H1 (cell line): ENCODE measurements at regions of chr6 and their contacts with region 1.

Region 1: GRCh38 chr6:8219352-8219943 is 117.1 kb upstream of the EEF1E1 start:
- DNase-seq: peak in 1 of 2 experiments; percentile 59
- H3K4me3 ChIP-seq: no peak overlapping the region
- H3K27ac ChIP-seq: no peak overlapping the region
- H3K4me1 ChIP-seq: no peaks in the 10 kb centered on the region
- H3K27me3 ChIP-seq: no peaks in the 10 kb centered on the region
- CTCF ChIP-seq: peak in 2 of 3 experiments; percentile 64 to 72; a peak in 3 of 4 replicates
- EP300 ChIP-seq: no peak
- POLR2A ChIP-seq: no peak
- RAD21 ChIP-seq: peak; percentile 86 to 88

Region 2: GRCh38 chr6:8139451-8139850 is 80.0 kb before region 1 on chr6:
- CTCF ChIA-PET with region 1: interaction called, 24 read pairs
- POLR2A ChIA-PET with region 1: no interaction called
- DNase-seq: no peak
- H3K4me3 ChIP-seq: no peak overlapping the region
- H3K27ac ChIP-seq: no peak overlapping the region
- H3K4me1 ChIP-seq: no peaks in the 10 kb centered on the region
- H3K27me3 ChIP-seq: no peaks in the 10 kb centered on the region
- CTCF ChIP-seq: no peak
- EP300 ChIP-seq: no peak
- POLR2A ChIP-seq: no peak
- RAD21 ChIP-seq: no peak

Region 3: DNA sequence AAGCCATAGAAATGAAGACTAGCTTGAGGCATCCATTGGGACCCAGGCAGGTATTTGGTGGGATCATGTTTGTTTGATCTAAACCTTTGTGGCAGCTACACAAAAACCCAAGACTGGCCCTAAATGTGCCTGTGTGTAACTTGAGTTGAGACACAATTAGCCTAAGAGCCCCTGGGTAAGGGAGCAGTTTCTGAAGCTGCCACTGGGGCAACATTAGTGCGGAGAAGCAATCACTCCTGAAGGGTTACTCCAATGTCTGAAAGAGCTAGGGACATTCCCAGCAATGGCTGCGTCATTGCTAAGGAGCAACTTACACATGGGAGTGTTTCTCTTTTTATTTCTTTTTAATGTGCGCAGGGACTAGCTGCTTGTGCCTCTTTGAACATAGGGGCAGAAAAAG is 49.2 kb before region 1 on chr6:
- CTCF ChIA-PET with region 1: interaction called, 45 read pairs
- POLR2A ChIA-PET with region 1: no interaction called
- DNase-seq: no peak
- H3K4me3 ChIP-seq: no peak overlapping the region
- H3K27ac ChIP-seq: no peak overlapping the region
- H3K4me1 ChIP-seq: peaks cover 0 to 2% (median 0%) of the 10 kb centered on the region in 4 experiments; a peak in 2 of 7 replicates
- H3K27me3 ChIP-seq: no peaks in the 10 kb centered on the region
- CTCF ChIP-seq: peak; percentile 6 to 48 (median 28)
- EP300 ChIP-seq: no peak
- POLR2A ChIP-seq: no peak
- RAD21 ChIP-seq: peak; percentile 4 to 34; a peak in 2 of 4 replicates

Region 4: DNA sequence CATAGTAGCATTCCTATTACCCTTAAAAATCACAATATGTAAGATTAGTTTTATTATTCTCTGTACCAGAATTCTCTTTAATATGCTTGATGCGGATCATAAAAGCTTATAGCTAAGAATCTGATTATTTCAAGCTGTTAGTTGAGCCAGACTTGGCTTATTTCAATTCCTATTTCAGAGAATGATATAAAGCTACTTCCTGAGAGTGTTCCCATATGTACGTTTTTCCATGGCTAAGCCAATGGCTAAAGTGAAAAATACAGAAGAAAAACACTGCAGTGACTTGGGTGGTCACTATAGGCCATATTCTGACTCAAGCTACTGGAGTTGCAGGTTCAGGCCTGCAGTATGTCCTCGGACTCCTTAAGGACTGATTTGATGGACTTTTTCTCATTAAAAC is 19.2 kb before region 1 on chr6:
- CTCF ChIA-PET with region 1: interaction called, 39 read pairs
- POLR2A ChIA-PET with region 1: no interaction called
- DNase-seq: no peak
- H3K4me3 ChIP-seq: no peak overlapping the region
- H3K27ac ChIP-seq: no peak overlapping the region
- H3K4me1 ChIP-seq: no peaks in the 10 kb centered on the region
- H3K27me3 ChIP-seq: no peaks in the 10 kb centered on the region
- CTCF ChIP-seq: no peak
- EP300 ChIP-seq: no peak
- POLR2A ChIP-seq: no peak
- RAD21 ChIP-seq: no peak

Region 5: GRCh38 chr6:8229915-8230756 is 10.7 kb after region 1 on chr6:
- CTCF ChIA-PET with region 1: interaction called, 40 read pairs
- POLR2A ChIA-PET with region 1: no interaction called
- DNase-seq: peak in 1 of 2 experiments; percentile 39
- H3K4me3 ChIP-seq: no peak overlapping the region
- H3K27ac ChIP-seq: no peak overlapping the region
- H3K4me1 ChIP-seq: peaks cover 0 to 4% (median 0%) of the 10 kb centered on the region in 4 experiments; a peak in 1 of 7 replicates
- H3K27me3 ChIP-seq: no peaks in the 10 kb centered on the region
- CTCF ChIP-seq: no peak
- EP300 ChIP-seq: no peak
- POLR2A ChIP-seq: no peak
- RAD21 ChIP-seq: no peak